Activated CD4-positive, alpha-beta T cell treated with anti-CD3 and anti-CD28 coated beads, Interleukin-2, amount 10 ng/mL, durations not matched to agents 24 days and 14 days (primary cell): ENCODE measurements at regions of chr9 and their contacts with region 1.

Region 1: DNA sequence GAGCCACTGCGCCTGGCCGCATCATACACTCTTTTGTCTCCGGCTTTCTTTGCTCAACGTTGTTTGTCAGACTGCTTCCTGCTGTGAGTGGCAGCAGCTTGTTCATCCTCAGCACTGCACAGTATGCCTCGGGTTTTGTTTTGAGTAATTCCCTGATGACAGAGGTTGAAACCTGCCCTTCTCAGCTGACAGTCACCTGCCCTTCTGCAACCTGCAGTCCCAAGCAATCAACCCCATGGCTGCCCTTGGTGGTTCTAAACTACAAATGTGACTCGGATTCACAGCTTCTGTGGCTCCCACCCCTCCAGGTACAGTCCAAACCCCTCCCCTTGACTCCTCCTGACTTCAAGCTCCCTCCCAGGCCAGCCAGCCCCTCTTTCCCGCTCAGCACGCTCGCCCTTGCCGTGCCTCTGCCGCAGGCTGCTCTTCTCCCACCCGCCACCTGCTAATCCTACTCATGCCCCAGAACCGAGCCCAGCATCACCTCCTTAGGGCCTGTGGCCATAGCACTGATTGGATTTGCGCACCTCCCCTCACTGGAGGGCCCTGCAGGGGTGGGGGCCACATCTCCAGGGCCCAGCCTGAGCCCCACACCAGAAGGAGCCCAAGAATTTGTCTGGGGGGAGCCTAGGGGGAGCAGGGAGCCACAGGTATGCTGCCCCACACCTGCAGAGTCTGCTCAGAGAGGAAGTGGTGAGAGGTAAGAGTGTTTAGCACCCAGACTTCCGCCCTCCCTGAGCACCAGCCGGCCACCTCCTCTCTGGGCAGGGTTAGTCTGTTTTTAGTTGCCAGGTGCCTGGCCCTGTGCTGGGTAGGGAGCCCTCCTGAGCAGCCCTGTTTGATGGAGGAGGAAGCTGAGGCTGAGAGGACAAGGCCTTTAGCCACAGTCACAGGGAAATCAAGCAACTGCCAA is 10.1 kb downstream of the EEIG1 start:
- DNase-seq: peak; percentile 92
- H3K4me3 Mint-ChIP-seq: peak overlapping the region; percentile 96
- H3K27ac Mint-ChIP-seq: peak overlapping the region; percentile 89
- H3K4me1 Mint-ChIP-seq: peaks cover 95% of the 10 kb centered on the region
- H3K27me3 Mint-ChIP-seq: no peaks in the 10 kb centered on the region

Region 2: GRCh38 chr9:127943731-127944144 is 26.9 kb before region 1 on chr9:
- intact Hi-C with region 1: loop called (anchors 2 kb)
- DNase-seq: peak; percentile 93
- H3K4me3 Mint-ChIP-seq: no peak overlapping the region
- H3K27ac Mint-ChIP-seq: peak overlapping the region; percentile 80
- H3K4me1 Mint-ChIP-seq: peaks cover 17% of the 10 kb centered on the region
- H3K27me3 Mint-ChIP-seq: no peaks in the 10 kb centered on the region

Region 3: DNA sequence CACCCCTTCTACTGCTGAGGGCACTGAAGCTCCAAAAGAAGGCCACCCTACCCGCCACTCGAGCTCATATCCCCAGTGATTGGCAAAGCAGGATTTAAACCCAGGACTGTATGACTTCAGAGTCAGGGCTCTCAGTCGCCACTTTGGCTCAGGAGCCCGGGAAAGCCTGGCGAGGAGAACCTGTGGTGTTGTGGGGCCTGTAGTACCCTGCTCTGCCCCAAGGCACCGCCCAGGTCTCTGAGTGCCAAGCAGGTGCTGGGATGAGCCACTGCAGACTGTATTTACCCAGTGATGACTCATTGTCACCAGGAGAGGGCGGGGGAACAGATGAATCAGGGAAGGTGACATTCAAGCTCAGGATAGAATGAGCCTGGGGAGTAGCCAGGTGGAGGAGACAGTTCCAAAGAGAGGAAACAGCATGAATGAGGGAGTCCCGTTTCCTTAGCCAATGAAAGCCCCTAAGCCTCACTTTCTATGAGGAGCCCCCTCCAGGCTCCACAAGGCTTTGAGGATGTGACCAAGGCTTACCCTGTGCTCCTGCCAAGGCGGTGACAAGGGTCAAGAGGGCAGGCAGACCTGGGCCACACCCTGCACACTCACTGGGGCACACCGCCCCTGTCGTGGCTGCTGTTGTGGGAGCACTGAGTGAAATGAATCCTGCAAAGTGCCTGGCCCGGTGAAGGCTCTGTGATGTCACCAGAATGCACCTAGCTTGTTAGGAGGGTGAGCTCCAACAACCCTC is 15.2 kb before region 1 on chr9:
- intact Hi-C with region 1: loop called (anchors 1 kb)
- DNase-seq: peak; percentile 89
- H3K4me3 Mint-ChIP-seq: peak overlapping the region; percentile 42
- H3K27ac Mint-ChIP-seq: peak overlapping the region; percentile 72
- H3K4me1 Mint-ChIP-seq: peaks cover 71% of the 10 kb centered on the region
- H3K27me3 Mint-ChIP-seq: no peaks in the 10 kb centered on the region

Region 4: GRCh38 chr9:127980706-127981558 is 10.3 kb after region 1 on chr9 and contains the start of gene EEIG1:
- intact Hi-C with region 1: loop called (anchors 1 kb)
- DNase-seq: peak; percentile 100
- H3K4me3 Mint-ChIP-seq: peak within 1 kb of the TSS; percentile 96
- H3K27ac Mint-ChIP-seq: peak within 1 kb of the TSS; percentile 94
- H3K4me1 Mint-ChIP-seq: peaks cover 53% of the 10 kb centered on the region
- H3K27me3 Mint-ChIP-seq: no peaks in the 10 kb centered on the region
- total RNA-seq, gene EEIG1: 56.1 and 64.4 TPM in 2 replicates

Region 5: GRCh38 chr9:128026773-128027541 is 56.3 kb after region 1 on chr9:
- intact Hi-C with region 1: loop called (anchors 1 kb)
- DNase-seq: peak; percentile 85
- H3K4me3 Mint-ChIP-seq: peak overlapping the region; percentile 74
- H3K27ac Mint-ChIP-seq: peak overlapping the region; percentile 98
- H3K4me1 Mint-ChIP-seq: peaks cover 82% of the 10 kb centered on the region
- H3K27me3 Mint-ChIP-seq: no peaks in the 10 kb centered on the region

Region 6: DNA sequence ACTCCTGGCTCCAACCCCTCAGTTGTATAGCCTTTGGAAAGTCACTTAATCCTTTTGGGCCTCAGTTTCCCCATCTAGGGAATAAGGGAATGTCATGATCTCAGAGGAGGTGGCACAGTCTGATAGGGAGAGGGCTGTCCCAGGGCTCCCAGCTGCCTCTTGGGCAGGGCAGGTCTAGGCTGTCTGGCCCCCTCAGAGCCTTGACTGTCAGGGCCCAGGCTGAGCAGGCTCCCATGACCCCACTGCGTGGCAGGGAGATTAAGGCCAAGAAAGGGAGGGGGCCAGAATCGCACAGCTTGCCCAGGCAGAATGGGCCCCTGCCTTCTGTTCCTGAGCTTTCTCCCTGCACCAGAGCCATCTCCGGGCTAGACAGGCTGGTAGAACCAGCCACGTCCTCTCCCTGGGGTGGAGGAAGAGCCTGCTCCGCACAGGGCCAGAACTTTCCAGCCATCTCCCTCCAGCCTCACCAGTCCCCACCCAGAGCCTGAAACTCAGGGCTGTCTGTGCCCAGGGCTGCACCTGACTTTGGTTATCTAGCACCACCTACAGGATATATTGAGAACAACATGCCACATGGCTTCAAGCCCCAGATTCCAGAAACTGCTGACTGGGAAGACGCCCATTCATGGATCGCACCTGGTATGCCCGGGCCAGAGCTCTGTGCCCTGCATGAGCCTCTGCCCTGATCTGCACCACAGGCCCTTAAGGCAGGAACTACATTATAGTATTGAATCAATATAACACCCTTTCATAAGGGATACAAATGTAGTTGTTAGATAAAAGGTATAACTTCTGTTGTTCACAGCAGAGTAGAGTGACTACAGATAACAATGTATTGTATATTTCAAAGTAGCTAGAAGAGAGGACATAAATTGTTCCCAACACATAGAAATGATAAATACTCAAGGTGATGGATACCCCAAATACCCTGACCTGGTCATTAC is 64.4 kb after region 1 on chr9:
- intact Hi-C with region 1: loop called (anchors 1 kb)
- DNase-seq: peak; percentile 92
- H3K4me3 Mint-ChIP-seq: no peak overlapping the region
- H3K27ac Mint-ChIP-seq: peak overlapping the region; percentile 9
- H3K4me1 Mint-ChIP-seq: peaks cover 30% of the 10 kb centered on the region
- H3K27me3 Mint-ChIP-seq: no peaks in the 10 kb centered on the region